Posterior cingulate gyrus (tissue), 11 donors: ENCODE measurements at regions of chr19 and their contacts with region 1.

Region 1: GRCh38 chr19:58154679-58155648 is 4.4 kb upstream of the ZNF329 start:
- DNase-seq: peak; percentile 86 to 98 (median 94)

Region 2: GRCh38 chr19:57819475-57820148 is 335.4 kb before region 1 on chr19:
- intact Hi-C with region 1: loop called (anchors 10 kb)
- DNase-seq: peak; percentile 72 to 97 (median 86)

Region 3: GRCh38 chr19:57934820-57935665 is 219.9 kb before region 1 on chr19 and contains the start of gene ZNF418:
- intact Hi-C with region 1: loop called (anchors 10 kb)
- DNase-seq: peak; percentile 45 to 96 (median 76)

Region 4: DNA sequence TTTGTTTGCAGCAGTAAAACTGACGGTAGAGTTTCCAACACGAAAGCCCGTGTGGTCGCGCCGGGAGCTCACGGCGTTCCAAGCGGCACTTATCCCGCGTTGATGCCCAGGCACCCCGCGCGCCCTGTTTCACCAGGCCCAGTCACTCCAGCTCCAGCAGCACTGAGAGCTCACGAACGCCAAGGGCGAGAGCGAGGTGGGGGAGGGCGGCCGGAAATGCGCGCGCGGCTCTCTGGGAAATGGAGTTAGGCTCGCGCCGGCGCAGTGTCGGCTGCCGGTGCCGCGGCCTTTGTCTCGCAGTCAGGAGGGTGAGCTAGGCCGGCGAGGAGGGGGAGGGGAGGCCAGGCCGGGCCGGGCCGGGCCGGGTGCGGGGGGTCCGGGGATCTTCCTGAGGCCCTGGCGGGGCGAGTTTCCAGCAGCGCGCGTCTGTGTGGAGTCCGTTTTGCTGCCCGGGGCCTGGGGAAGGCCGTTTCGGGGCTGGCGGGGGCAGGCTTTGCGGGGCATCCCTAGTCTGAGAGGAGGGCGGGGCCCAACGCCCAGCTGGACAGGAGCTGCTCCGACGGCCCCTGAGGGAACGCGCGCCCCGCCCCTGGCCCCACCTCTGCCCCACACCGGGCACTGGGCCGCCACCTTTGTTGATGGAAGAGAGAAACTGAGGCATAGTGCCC is 95.8 kb before region 1 on chr19 and contains the start of gene ZNF135:
- intact Hi-C with region 1: loop called (anchors 1 kb)
- DNase-seq: peak; percentile 76 to 98 (median 83)

Region 5: DNA sequence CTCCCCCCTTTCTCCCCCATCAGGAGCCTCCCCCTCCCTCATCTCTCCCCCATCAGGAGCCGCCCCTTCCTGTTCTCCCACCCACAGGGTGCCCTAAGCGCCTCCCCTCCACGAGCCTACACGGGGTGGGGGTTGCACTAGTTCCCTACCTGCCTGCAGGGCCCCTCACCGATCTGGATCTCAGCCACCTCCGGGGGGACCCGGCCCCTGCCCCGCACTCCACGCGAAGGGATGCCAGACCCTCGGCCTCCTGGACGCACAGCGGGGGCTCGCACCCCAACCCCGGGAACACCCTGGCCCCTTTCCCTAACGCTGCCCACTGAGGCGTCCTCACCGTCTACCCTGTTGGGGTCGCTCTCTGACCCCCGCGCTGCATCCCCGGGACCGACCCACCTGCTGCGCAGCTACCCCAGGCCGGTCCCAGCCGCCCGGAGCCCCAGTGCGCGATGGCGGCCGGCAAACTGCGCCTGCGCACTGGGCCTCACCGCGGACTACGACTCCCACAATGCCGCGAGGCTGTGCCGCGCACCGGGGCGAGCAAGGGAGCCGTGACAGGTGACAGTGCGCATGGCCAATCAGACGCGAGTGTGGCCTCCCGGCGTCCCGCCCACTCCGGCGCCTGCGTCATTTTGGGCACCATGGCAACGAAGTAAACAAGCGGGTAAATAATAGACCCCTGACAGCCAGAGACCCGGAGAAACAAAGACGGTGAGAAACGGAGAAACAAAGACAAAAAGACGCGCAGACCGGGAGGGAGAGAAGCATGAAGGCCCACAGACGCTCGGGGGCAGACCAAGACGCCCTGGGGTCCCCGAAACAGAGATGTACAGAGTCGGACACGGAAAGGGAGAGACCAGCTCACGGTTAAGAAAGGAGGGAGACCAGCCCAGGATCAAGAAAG is 56.9 kb before region 1 on chr19 and contains the start of gene ZSCAN18:
- intact Hi-C with region 1: loop called (anchors 2 kb)
- DNase-seq: peak; percentile 96 to 100 (median 98)

Region 6: DNA sequence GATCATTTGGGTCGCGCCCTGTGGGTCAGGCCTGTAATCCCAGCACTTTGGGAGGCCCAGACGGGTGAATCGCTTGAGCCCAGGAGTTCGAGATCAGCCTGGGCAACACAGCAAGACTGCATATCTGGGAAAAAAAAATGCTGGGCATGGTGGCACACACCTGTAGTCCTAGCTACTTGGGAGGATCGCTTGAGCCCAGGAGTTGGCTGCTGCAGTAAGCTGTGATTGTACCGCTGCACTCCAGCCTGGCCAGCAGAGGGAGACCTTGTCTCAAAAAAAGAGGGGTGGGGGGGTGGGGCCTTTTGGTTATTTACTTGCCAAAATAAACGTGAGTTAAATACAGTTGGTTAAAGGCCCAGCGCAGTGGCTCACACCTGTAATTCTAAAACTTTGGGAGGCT is 63.9 kb after region 1 on chr19:
- intact Hi-C with region 1: no loop called
- DNase-seq: no peak